Calu3 (cell line): ENCODE measurements at regions of chr11 and their contacts with region 1.

Region 1: DNA sequence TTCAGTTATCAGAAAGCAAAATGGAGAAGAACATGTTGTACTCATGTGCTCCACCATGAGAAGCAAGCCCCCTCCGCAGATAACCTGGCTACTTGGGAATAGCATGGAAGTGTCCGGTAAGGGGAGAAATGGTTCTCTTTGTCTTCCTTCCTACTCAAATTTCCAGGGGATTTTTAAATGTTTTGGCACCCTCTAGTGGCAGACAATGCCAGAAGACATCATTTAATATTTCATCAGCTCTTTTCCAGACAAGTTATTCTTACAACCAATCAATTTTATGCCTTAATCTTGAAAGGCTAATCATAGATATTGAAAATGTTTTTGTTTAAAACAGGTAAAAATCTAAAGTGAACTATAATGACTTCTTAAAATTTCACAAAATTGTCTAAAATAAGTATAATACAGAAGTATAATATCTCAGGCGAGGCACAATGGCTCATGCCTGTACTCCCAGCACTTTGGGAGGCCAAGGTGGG is 15.7 kb downstream of the CRTAM start:
- DNase-seq: peak; percentile 61
- H3K4me3 Mint-ChIP-seq: no peak overlapping the region
- H3K27ac Mint-ChIP-seq: no peak overlapping the region
- H3K4me1 Mint-ChIP-seq: peaks cover 19% of the 10 kb centered on the region
- H3K27me3 Mint-ChIP-seq: no peaks in the 10 kb centered on the region
- CTCF ChIP-seq: no peak

Region 2: GRCh38 chr11:122578168-122578825 is 275.7 kb before region 1 on chr11:
- CTCF ChIA-PET with region 1: no interaction called
- intact Hi-C with region 1: loop called (anchors 2 kb)
- DNase-seq: no peak
- H3K4me3 Mint-ChIP-seq: no peak overlapping the region
- H3K27ac Mint-ChIP-seq: no peak overlapping the region
- H3K4me1 Mint-ChIP-seq: peaks cover 8% of the 10 kb centered on the region
- H3K27me3 Mint-ChIP-seq: no peaks in the 10 kb centered on the region
- CTCF ChIP-seq: no peak

Region 3: DNA sequence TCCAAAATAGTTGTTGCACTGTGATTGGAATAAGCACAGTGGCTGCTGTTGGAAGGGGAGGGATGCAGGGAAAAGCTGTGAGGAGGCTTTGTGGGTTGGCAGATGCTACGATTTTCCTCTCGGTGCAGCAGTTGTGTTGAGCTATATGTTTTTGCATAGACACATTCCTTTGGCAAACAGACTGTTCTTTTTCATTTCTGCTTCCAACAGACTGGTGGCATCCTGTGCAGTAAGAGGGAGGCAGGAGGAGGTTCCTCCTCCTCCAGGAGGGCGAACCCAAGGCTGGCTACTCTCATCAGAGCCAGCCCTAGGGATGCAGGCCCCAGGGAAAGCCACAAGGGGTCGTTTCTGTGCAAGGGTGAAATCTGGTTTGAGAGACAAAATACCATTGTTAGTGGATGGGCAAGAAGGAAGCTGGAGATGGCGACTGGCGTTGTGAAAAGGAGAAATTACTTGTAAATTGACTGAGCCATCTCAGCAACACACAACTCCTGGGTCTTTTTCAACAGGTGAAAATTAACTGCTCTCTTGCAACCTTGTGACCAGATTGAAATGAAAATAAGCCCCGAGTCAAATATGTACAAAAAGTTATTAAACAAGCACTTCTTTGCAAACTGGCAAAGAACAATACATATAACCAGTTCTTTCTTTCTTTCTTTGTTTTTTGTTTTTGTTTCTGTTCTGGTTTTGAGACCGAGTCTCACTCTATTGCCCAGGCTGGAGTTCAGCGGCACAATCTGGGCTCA is 225.0 kb before region 1 on chr11:
- CTCF ChIA-PET with region 1: interaction called, 9 read pairs
- intact Hi-C with region 1: loop called (anchors 2 kb)
- DNase-seq: peak; percentile 70
- H3K4me3 Mint-ChIP-seq: no peak overlapping the region
- H3K27ac Mint-ChIP-seq: no peak overlapping the region
- H3K4me1 Mint-ChIP-seq: no peaks in the 10 kb centered on the region
- H3K27me3 Mint-ChIP-seq: peaks cover 6% of the 10 kb centered on the region
- CTCF ChIP-seq: peak; percentile 65

Region 4: GRCh38 chr11:122784325-122784955 is 69.6 kb before region 1 on chr11:
- CTCF ChIA-PET with region 1: no interaction called
- intact Hi-C with region 1: no loop called
- DNase-seq: no peak
- H3K4me3 Mint-ChIP-seq: no peak overlapping the region
- H3K27ac Mint-ChIP-seq: no peak overlapping the region
- H3K4me1 Mint-ChIP-seq: peaks cover 16% of the 10 kb centered on the region
- H3K27me3 Mint-ChIP-seq: no peaks in the 10 kb centered on the region
- CTCF ChIP-seq: no peak

Region 5: GRCh38 chr11:122796128-122796717 is 57.8 kb before region 1 on chr11:
- CTCF ChIA-PET with region 1: interaction called, 6 read pairs
- intact Hi-C with region 1: loop called (anchors 1 kb)
- DNase-seq: peak; percentile 48
- H3K4me3 Mint-ChIP-seq: no peak overlapping the region
- H3K27ac Mint-ChIP-seq: no peak overlapping the region
- H3K4me1 Mint-ChIP-seq: no peaks in the 10 kb centered on the region
- H3K27me3 Mint-ChIP-seq: no peaks in the 10 kb centered on the region
- CTCF ChIP-seq: peak; percentile 74

Region 6: GRCh38 chr11:122814401-122814800 is 39.6 kb before region 1 on chr11:
- CTCF ChIA-PET with region 1: interaction called, 8 read pairs
- intact Hi-C with region 1: loop called (anchors 1 kb)
- DNase-seq: peak; percentile 10
- H3K4me3 Mint-ChIP-seq: no peak overlapping the region
- H3K27ac Mint-ChIP-seq: peak overlapping the region; percentile 28
- H3K4me1 Mint-ChIP-seq: peaks cover 17% of the 10 kb centered on the region
- H3K27me3 Mint-ChIP-seq: no peaks in the 10 kb centered on the region
- CTCF ChIP-seq: no peak

Region 7: DNA sequence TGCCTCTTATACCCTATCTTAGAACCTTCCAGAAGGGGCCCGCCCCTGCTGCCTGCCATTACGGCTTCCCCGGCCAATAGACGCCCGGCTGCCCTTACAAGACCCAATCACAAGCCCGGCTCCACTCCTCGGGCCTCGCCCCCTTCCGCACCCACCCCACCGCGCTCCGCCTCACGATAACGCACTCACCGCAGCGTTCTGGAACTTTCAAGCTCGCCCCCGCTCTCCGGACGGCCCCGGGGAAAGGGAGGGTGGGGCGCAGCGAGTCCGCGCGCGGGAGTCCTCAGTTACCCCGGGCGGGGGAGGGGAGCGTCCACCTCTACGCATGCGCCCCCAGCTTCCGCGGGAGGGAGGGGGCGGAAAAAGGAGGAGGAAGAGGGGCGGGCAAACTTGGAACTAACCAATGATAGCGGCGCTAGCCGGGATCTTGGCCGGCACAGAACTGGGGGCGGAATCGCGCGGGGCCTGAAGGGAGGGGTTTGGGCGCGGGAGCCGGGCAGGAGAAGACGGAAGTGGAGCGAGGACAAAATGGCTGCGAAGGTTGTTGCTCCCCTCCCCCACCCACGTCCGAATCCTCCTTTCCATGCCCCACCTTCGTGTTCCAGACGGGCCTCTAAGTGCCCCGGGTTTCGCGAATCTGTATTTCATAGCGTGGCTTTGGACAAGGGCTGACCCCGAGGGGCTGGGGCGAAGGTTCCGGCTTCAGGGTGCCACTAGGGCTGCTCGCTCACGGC is 208.3 kb after region 1 on chr11:
- CTCF ChIA-PET with region 1: no interaction called
- intact Hi-C with region 1: no loop called
- DNase-seq: peak; percentile 96
- H3K4me3 Mint-ChIP-seq: peak overlapping the region; percentile 86
- H3K27ac Mint-ChIP-seq: peak overlapping the region; percentile 98
- H3K4me1 Mint-ChIP-seq: peaks cover 14% of the 10 kb centered on the region
- H3K27me3 Mint-ChIP-seq: no peaks in the 10 kb centered on the region
- CTCF ChIP-seq: no peak